ENCODE measurements at regions of chr11 and their contacts with region 1.

Region 1: DNA sequence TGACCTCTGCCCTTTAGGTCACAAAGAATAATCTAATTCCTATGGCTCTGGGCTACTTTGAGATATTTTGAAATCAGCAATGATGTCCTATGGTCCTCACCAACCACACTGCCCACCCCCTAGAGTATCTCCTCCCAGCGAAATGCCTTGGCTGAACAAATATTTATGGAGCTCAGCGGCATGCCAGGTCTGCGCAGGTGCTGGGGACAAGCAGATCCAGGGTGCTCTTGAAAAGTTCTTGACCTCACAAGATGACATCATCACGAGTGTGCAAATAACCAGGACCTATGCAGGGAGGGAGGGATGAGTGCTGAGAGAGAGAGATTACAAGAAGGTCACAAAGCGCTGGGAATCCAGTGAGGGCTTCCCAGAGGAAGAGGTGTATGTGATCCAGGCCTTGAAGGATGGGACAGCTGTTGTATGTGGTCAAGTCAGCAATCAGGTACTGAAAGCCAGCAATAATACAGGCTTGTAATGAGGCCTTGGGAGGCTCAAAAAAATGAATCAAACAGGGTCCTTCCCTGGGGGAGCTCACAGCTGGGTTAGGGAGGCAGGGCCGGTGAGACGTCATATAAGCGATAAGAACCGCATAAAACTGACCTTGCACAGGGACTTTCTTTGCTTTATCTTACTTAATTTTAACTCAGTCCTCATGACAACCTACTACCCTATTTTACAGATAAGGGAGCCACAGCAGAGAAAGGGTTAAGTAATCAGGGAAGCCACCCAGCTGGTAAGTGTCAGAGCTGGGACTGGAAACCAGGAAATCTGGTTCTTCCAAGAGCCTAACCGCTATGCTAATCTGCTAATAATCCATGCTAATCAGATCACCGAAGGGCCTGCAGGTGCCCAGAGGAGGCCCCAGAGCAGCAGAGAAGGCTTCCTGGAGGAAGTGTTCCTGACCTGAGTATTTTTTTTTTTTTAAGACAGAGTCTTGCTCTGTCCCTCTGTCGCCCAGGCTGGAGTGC is 8.3 kb downstream of the ARRB1 start:
- DNase-seq: no peak
- ATAC-seq: no peak
- H3K4me3 Mint-ChIP-seq: no peak overlapping the region
- H3K27ac Mint-ChIP-seq: peak overlapping the region; percentile 73
- H3K4me1 Mint-ChIP-seq: peaks cover 99% of the 10 kb centered on the region
- H3K27me3 Mint-ChIP-seq: no peaks in the 10 kb centered on the region

Region 2: DNA sequence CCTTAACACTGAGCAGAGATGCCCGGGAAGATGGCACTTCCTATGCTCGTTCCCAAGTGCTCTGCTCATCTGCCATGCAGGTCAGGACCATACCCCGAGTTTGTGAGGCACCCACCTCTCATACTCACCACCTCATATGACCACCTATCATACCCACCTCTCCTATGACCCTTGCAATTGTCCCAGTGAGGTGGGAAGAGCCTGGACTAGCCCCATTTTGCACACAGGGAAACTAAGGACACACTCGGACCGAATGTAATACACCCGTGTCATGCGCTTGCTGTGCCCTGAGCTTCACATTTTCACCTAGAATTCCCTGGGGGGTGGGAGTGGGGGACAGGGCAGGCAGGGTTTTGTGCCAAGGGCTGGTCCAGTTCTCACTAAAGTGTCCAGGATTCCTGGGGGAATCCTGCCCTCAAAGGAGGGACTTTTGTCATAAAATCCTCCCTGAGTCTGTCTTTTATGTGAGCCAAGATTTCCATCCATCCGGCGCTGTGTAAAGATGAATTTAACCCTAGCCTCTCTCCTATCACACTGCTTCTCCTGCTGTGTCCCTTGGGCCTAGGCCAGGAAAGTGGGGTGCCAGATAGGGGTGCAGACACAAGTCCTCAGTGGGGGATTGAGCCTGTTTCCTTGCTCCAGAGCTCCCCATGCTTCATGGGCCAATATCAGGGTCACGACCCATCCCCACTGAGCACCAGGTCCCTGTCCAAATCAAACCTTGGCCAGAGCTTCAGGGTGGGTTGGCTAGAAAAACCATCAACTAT is 82.6 kb before region 1 on chr11:
- CTCF ChIA-PET with region 1: no interaction called
- POLR2A ChIA-PET with region 1: no interaction called
- DNase-seq: no peak
- ATAC-seq: no peak
- H3K4me3 Mint-ChIP-seq: no peak overlapping the region
- H3K27ac Mint-ChIP-seq: peak overlapping the region; percentile 82
- H3K4me1 Mint-ChIP-seq: peaks cover 45% of the 10 kb centered on the region
- H3K27me3 Mint-ChIP-seq: peaks cover 20% of the 10 kb centered on the region

Region 3: GRCh38 chr11:75270896-75271418 is 72.2 kb before region 1 on chr11:
- CTCF ChIA-PET with region 1: interaction called, 13 read pairs
- POLR2A ChIA-PET with region 1: no interaction called
- DNase-seq: peak; percentile 37
- ATAC-seq: no peak
- H3K4me3 Mint-ChIP-seq: no peak overlapping the region
- H3K27ac Mint-ChIP-seq: peak overlapping the region; percentile 72
- H3K4me1 Mint-ChIP-seq: peaks cover 25% of the 10 kb centered on the region
- H3K27me3 Mint-ChIP-seq: no peaks in the 10 kb centered on the region

Region 4: DNA sequence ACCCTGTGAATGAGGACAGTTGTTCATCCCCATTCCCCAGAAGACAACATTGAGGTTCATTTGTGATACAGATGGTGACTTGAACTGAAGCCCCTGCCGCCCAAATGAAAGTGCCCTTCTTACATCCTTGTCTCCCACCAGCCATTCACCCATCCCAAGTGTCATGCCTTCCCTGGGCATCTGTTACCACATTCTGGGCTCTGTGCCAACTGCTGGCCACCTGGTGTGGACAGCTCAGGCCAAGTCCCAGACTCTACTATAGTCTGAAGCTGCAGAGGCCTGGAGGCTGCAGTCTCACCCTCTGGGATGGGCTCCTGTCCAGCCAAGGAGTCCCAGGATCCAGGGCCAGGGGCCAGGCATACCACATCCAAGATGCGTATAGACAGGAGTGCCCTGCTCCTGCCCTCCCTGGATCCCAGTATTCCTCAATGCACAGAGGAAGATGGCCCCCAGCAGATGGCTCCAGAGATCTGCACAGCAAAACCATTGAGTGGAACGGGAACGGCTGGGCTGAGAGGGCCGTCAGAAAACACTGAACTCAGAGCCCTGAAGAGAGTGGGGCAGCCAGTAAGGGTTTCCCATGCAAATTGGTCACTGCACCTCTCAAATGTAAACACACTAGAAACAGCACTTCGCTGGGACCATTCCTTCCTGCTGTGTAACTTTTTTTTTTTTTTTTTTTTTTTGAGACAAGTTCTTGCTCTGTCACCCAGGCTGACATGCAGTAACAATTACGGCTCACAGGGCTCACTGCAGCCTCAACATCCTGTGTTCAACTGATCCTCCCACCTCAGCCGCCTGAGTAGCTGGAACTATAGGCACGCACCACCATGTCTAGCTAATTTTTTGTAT is 14.5 kb before region 1 on chr11:
- CTCF ChIA-PET with region 1: interaction called, 51 read pairs
- POLR2A ChIA-PET with region 1: interaction called, 10 read pairs
- DNase-seq: peak; percentile 87
- ATAC-seq: peak; percentile 89
- H3K4me3 Mint-ChIP-seq: peak overlapping the region; percentile 47
- H3K27ac Mint-ChIP-seq: peak overlapping the region; percentile 94
- H3K4me1 Mint-ChIP-seq: peaks cover 78% of the 10 kb centered on the region
- H3K27me3 Mint-ChIP-seq: no peaks in the 10 kb centered on the region

Measured in activated CD8-positive, alpha-beta T cell treated with anti-CD3 and anti-CD28 coated beads, Interleukin-2, amount 10 ng/mL, durations not matched to agents 7 days and 5 days (primary cell).